AG04450 (cell line): ENCODE measurements at regions of chr16 and their contacts with region 1.

Region 1: GRCh38 chr16:68040507-68041288 is 17.6 kb downstream of the DUS2 start:
- DNase-seq: peak; percentile 18
- H3K4me3 ChIP-seq: no peak overlapping the region
- H3K27ac ChIP-seq: no peak overlapping the region
- H3K27me3 ChIP-seq: no peaks in the 10 kb centered on the region
- CTCF ChIP-seq: peak; percentile 88

Region 2: DNA sequence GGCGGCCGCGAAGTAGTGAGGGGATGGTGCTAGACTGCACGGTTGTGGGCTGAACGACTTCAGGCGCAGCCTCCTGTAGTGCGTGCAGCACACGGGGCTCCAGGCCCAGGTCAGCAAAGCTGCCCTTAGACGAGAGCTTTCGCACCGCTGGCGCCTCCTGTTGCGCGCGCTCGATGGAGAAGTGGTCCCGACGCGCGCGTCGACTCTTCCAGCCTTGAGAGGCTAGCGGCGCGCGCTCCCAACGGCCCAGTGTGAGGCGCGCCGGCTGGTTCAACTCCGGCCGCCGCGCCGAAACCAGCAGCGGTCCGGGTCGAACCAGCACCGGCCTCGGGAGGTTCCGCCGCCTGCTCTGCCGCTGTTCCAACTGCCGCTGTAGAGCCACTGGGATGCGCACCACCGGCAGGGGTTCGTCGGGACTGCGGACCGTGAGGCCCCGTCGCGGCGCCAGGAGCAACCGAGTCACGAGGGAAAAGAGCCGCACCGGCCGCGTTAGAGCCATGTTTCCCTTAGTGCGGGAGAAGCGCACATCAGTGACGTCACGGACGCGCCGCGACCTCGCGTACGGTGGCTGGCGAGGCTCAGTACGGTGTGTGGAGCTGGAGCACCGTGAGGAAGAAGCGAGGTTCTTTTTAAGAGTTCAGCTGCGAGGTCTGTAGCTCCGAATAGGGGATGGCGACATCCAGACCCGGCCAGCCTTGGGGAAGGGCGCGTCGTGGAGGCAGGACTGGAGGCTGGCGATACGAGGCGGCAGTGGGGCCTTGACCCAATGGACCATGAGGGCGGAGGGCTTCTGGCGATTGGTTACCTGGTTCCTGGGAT is 17.8 kb before region 1 on chr16 and contains the starts of genes DDX28 and DUS2:
- CTCF ChIA-PET with region 1: interaction called, 22 read pairs
- POLR2A ChIA-PET with region 1: interaction called, 3 read pairs
- DNase-seq: peak; percentile 79
- H3K4me3 ChIP-seq: peak within 1 kb of the TSS; percentile 98
- H3K27ac ChIP-seq: peak within 1 kb of the TSS; percentile 65
- H3K27me3 ChIP-seq: no peaks in the 10 kb centered on the region
- CTCF ChIP-seq: no peak
- polyA plus RNA-seq, gene DDX28: 7.6 and 8.1 TPM in 2 replicates
- polyA plus RNA-seq, gene DUS2: 13.7 and 14.1 TPM in 2 replicates

Region 3: GRCh38 chr16:68028996-68029395 is 11.7 kb before region 1 on chr16:
- CTCF ChIA-PET with region 1: interaction called, 22 read pairs
- POLR2A ChIA-PET with region 1: no interaction called
- DNase-seq: no peak
- H3K4me3 ChIP-seq: no peak overlapping the region
- H3K27ac ChIP-seq: no peak overlapping the region
- H3K27me3 ChIP-seq: no peaks in the 10 kb centered on the region
- CTCF ChIP-seq: no peak

Region 4: DNA sequence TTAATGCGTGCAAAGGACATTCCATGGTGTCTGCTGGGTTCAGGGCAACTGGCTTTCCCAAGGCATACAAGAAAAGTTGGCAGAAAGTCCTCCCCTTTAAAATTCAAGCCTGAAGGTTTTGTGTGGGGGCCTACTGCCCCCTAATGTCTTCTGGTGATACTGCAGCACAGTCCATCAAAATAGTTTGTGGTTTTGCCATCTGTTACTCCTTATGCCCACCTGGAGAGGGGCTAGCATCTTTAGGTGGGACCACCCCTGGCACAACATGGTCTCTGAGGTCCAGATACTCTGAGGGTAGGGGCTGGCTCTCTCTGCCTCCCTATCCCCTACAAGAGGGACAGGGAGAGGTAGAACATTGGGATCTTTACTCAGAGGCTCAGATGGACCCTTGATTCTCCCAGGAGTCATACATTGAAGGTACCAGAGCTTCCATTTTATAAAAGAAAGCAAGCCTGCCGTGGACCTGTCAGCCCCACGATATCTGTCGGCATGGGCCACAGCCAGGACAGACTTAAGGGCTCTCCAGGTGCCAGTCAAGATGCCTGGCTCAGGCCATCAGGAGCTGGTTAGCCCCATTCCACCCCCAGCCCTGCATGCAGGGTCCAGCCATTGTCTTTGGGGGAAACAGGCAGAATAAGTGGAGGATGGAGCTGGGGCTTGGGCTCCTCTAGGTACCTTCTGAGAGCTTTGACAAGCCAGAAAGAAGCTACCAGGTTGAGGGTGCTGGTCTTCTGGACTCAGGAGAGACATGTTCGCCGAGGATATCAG is 188.9 kb after region 1 on chr16:
- CTCF ChIA-PET with region 1: interaction called, 16 read pairs
- POLR2A ChIA-PET with region 1: no interaction called
- DNase-seq: peak; percentile 29
- H3K4me3 ChIP-seq: no peak overlapping the region
- H3K27ac ChIP-seq: no peak overlapping the region
- H3K27me3 ChIP-seq: no peaks in the 10 kb centered on the region
- CTCF ChIP-seq: peak; percentile 96